CD4-positive, alpha-beta memory T cell (primary cell): ENCODE measurements at regions of chr11 and their contacts with region 1.

Region 1: DNA sequence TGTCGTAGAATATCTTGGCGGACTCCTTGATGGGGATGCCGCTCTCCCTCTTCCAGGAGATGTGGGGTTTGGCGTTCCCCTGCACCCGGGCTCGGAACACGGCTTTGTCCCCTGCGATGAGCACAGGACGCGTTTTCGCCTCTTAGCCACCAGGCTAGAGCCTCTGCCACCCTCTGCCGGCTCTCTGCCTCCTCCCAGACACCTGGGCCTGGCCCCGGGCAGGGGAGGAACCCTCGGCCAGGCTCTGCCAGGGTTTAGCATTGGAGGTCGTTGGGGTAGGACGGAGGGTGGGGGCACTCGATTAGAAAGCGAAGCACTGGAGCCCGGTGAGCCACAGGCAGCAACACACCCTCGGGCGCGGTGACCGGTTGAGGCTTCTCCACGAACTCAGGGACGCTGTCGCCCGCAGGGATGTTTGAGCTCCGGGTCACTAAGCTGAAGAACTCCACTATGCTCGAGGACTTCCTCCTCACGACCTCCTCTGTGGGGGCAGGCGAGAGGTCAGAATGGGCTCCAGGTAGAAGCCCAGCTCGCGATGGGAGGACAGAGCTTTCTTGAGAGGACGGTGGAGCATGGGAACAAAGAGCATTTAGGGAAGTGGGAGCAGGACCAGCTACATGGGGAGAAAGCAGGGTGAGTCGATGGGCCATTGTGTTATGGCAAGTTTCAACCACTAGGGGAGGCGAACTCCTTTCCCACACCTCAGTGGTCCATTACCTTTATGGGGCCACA is 4.3 kb downstream of the IGSF22 start:
- DNase-seq: peak; percentile 36 to 60 (median 53)
- H3K4me3 ChIP-seq: peak overlapping the region; percentile 77 to 81
- H3K4me3 Mint-ChIP-seq: peak overlapping the region; percentile 87 to 96 (median 92)
- H3K27ac ChIP-seq: peak overlapping the region; percentile 56
- H3K27ac Mint-ChIP-seq: peak overlapping the region; percentile 47 to 92 (median 81)
- H3K4me1 ChIP-seq: peaks cover 5% of the 10 kb centered on the region
- H3K4me1 Mint-ChIP-seq: peaks cover 4 to 13% (median 7%) of the 10 kb centered on the region in 4 donors
- H3K27me3 ChIP-seq: no peaks in the 10 kb centered on the region
- H3K27me3 Mint-ChIP-seq: no peaks in the 10 kb centered on the region

Region 2: DNA sequence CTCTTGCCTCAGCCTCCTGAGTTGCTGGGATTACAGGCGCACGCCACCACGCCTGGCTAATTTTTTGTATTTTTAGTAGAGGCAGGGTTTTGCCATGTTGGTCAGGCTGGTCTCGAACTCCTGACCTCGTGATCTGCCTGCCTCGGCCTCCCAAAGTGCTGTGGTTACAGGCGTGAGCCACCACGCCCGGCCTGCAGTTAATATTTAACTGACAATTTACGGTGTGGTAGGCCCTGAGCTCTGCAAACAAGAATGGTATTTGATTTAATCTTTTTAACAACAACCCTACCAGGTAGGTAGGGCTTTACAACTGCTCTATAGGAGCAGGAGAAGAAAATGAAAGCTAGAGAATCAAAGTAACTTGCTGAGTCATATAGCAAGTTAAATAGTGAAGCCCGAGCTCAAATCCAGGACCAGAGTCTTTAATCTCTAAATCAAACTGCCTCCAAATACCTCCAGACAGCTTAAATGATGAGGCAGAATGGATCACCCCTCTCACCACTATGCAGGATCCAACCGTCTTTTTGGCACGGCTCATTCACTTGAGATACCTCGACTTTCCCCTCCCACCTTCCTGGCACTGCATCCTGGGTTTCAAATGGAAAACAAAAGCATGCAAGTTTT is 142.6 kb before region 1 on chr11:
- CTCF ChIA-PET with region 1: interaction called, 12 read pairs
- POLR2A ChIA-PET with region 1: no interaction called
- intact Hi-C with region 1: no loop called
- DNase-seq: peak in 3 of 5 donors; percentile 22 to 54 (median 27)
- H3K4me3 ChIP-seq: peak overlapping the region in 1 of 2 donors; percentile 33
- H3K4me3 Mint-ChIP-seq: peak overlapping the region; percentile 66 to 88 (median 81)
- H3K27ac ChIP-seq: no peak overlapping the region
- H3K27ac Mint-ChIP-seq: peak overlapping the region; percentile 82 to 94 (median 89)
- H3K4me1 ChIP-seq: peaks cover 23% of the 10 kb centered on the region
- H3K4me1 Mint-ChIP-seq: peaks cover 17 to 38% (median 25%) of the 10 kb centered on the region in 4 donors
- H3K27me3 ChIP-seq: no peaks in the 10 kb centered on the region
- H3K27me3 Mint-ChIP-seq: no peaks in the 10 kb centered on the region

Region 3: DNA sequence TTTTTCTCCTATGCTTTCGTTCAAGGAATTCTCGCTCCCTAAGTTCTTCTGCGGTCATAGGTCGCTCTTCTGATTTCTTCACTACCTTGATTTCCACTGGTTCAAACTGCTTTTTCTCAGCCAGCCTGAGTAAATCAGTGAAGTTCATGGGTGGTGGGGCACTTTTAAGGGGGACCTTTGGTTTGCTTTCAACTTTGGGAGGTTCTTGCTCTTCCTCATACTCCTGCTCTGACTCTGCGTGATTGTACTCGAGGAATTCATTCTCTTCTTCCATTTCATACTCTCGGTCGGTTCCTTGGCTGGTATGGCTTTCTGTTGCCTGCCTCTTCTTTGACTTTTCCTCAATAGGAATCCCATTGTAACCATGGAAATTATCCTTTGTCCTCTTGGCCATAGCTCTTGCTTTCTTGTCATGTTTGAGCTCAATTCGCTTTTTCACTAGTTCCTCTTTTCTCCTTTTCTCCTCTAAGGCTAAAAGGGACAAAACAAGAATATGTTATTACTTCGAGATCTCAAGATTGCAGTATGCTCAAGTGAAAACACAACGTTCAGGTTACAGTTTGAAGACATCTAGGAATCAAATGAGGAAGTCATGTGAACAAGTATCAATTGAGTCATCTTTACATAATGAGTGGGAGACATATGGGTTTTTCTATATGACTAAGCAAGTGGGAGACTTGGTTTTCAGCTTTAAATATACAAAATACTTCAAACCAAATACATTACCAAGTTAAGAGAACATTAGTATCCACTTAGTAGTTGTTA is 105.9 kb before region 1 on chr11:
- CTCF ChIA-PET with region 1: interaction called, 5 read pairs
- POLR2A ChIA-PET with region 1: no interaction called
- intact Hi-C with region 1: loop called (anchors 5 kb)
- DNase-seq: no peak
- H3K4me3 ChIP-seq: no peak overlapping the region
- H3K4me3 Mint-ChIP-seq: peak overlapping the region in 5 of 8 donors; percentile 1 to 43 (median 15)
- H3K27ac ChIP-seq: no peak overlapping the region
- H3K27ac Mint-ChIP-seq: peak overlapping the region in 4 of 7 donors; percentile 63 to 90 (median 70)
- H3K4me1 ChIP-seq: peaks cover 48% of the 10 kb centered on the region
- H3K4me1 Mint-ChIP-seq: peaks cover 31 to 61% (median 42%) of the 10 kb centered on the region in 4 donors
- H3K27me3 ChIP-seq: no peaks in the 10 kb centered on the region
- H3K27me3 Mint-ChIP-seq: no peaks in the 10 kb centered on the region

Region 4: DNA sequence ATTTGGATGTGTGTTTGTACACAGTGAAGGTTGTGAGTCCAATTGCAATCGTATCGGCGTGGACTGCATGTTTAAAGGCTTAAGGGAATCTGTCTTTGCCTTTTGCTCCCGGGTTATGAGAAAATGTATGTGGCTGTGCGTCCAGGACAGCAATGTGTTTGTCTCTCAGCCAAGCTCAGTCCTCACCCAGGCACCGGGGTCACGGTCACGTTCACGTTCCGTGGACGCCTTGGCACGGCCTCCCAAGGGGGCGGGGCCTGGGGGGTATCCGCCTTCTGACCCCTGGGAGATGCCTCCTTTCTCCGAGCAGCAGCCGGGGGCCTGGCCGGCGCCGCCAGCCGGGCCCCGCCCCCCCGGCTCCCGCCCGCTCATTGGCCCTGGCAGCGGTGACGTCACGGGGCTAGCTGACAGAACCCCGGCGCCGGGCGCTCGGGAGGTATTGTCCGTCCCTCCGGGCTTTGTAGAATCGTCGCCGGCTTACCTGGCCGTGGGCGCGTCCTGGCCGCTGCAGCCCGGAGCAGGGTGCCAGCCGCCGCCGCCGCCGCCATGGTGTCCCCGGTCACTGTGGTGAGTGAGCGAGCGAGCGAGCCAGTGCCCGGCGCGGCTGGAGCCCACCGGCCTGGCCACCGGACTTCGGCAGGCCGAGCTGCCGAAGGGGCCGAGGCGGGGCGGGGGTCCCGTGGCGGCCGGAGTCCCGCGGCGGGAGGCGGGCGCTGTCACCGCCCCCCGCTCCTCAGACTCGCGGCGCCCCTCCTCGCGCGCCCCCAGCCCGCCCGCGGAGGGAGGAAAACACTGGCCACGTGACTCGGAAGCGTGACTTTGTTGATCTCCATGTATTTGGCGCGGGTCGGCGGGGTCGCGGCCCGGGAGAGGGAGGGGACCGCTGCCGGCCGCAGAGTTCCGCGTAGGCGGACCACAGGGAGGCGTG is 23.1 kb before region 1 on chr11 and contains the start of gene TMEM86A:
- CTCF ChIA-PET with region 1: interaction called, 42 read pairs
- POLR2A ChIA-PET with region 1: interaction called, 5 read pairs
- intact Hi-C with region 1: loop called (anchors 2 kb)
- DNase-seq: peak; percentile 87 to 91 (median 88)
- H3K4me3 ChIP-seq: peak within 1 kb of the TSS in 1 of 2 donors; percentile 64
- H3K4me3 Mint-ChIP-seq: peak within 1 kb of the TSS; percentile 79 to 88 (median 84)
- H3K27ac ChIP-seq: peak within 1 kb of the TSS; percentile 63
- H3K27ac Mint-ChIP-seq: peak within 1 kb of the TSS; percentile 64 to 95 (median 92)
- H3K4me1 ChIP-seq: peaks cover 15% of the 10 kb centered on the region
- H3K4me1 Mint-ChIP-seq: peaks cover 12 to 22% (median 17%) of the 10 kb centered on the region in 4 donors
- H3K27me3 ChIP-seq: no peaks in the 10 kb centered on the region
- H3K27me3 Mint-ChIP-seq: no peaks in the 10 kb centered on the region
- total RNA-seq, gene TMEM86A: 2.5 to 4.0 TPM